ENCODE measurements at regions of chr11 and their contacts with region 1.

Region 1: DNA sequence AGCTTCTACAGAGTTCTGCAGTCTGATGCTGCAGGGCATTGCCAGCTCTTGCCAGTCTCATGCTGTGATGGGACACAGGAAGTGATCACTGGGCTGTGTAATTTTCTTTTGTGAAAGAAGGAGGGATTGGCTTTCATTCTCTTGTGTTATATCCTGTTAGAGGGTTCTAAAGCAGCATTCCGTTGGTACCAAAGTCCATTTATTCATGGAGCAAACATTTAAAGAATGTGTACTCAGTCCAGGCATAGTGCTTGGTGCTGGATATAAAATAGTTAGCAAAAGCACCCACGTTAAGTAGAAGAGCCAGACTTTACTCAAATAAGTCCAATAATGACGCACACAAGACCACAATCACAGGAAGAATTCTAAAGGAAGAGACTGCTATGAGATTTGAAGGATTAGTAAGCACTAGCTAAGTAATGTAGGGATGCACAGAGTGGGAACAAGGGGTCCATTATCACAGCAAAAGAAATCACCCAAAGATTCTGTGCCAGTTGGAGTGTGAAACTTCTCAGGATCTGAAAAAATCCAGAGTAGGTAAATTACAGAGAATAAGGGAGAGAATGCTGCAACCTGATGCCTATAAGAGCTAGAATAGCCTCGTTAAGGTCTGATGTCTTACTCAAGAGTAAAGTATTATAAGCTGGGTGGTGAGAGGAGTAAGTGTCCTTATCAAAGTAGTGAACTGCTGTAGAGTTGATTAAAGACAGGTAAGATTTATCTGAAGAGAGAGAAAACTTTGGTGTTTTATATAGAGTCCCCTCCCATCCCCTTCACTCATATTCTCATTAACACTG is 728.3 kb downstream of the METTL15 start:
- DNase-seq: peak; percentile 81
- H3K4me3 ChIP-seq: no peak overlapping the region
- H3K27ac ChIP-seq: peak overlapping the region; percentile 96
- H3K4me1 ChIP-seq: peaks cover 70% of the 10 kb centered on the region
- H3K27me3 ChIP-seq: no peaks in the 10 kb centered on the region
- CTCF ChIP-seq: no peak
- POLR2A ChIP-seq: peak; percentile 82

Region 2: DNA sequence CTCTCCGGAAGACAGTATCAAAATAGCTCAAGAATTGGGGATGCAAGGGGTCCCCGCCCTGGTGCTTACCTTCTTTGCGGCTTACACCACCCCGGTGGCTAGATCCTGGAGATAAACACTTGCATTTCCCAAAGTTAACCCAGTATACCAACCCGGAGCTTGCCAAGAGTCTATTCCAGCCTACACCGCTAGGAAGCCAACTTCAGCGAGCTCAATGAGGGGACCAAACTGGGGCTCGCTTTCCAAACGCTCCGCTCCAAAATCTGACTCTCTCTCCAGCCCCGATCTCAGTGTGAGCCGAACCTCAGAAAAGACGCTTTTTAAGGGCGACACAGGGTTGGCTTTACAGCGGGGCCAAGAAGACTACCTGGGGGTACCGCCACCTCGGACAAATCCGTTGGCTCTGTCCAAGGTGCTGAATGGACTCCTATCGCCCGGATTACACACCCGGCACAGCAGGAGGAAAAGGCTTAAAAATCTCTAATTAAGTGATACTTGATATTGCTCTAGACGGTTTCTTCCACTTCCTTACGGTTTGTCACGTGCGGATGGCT is 1116.1 kb before region 1 on chr11:
- CTCF ChIA-PET with region 1: no interaction called
- POLR2A ChIA-PET with region 1: no interaction called
- dilution Hi-C with region 1: no loop called
- intact Hi-C with region 1: loop called (anchors 5 kb)
- DNase-seq: peak; percentile 52
- H3K4me3 ChIP-seq: no peak overlapping the region
- H3K27ac ChIP-seq: no peak overlapping the region
- H3K4me1 ChIP-seq: peaks cover 14% of the 10 kb centered on the region
- H3K27me3 ChIP-seq: peaks cover 50 to 80% of the 10 kb centered on the region in 2 experiments
- CTCF ChIP-seq: peak; percentile 8 to 20
- POLR2A ChIP-seq: no peak

Region 3: GRCh38 chr11:28649922-28650321 is 186.6 kb before region 1 on chr11:
- CTCF ChIA-PET with region 1: no interaction called
- POLR2A ChIA-PET with region 1: no interaction called
- dilution Hi-C with region 1: no loop called
- intact Hi-C with region 1: no loop called
- DNase-seq: peak; percentile 44
- H3K4me3 ChIP-seq: no peak overlapping the region
- H3K27ac ChIP-seq: no peak overlapping the region
- H3K4me1 ChIP-seq: peaks cover 11% of the 10 kb centered on the region
- H3K27me3 ChIP-seq: no peaks in the 10 kb centered on the region
- CTCF ChIP-seq: no peak
- POLR2A ChIP-seq: no peak

Region 4: GRCh38 chr11:28697920-28698827 is 138.3 kb before region 1 on chr11:
- CTCF ChIA-PET with region 1: interaction called, 5 read pairs
- POLR2A ChIA-PET with region 1: no interaction called
- dilution Hi-C with region 1: no loop called
- intact Hi-C with region 1: loop called (anchors 1 kb)
- DNase-seq: peak; percentile 60
- H3K4me3 ChIP-seq: no peak overlapping the region
- H3K27ac ChIP-seq: no peak overlapping the region
- H3K4me1 ChIP-seq: peaks cover 21% of the 10 kb centered on the region
- H3K27me3 ChIP-seq: no peaks in the 10 kb centered on the region
- CTCF ChIP-seq: peak; percentile 73 to 80
- POLR2A ChIP-seq: no peak

Region 5: DNA sequence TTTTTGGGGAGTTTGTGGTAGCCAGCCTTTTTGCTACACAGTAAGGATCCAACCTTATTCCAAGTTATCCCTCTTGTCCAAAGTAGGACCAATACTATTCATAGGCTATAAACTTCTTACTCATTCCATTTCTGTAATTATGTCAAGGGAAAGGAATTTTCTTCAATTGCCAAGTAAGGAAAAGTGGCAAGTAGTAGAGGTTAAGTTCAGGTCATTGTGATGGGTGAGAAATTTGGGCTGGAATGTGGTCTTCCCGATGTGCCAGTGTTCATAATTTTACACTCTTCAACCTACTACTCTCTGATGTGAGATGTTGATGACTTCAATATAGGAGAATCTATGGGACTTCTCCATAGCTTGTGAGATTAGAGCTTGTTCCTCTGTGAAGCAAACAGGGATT is 79.5 kb before region 1 on chr11:
- CTCF ChIA-PET with region 1: interaction called, 10 read pairs
- POLR2A ChIA-PET with region 1: interaction called, 18 read pairs
- dilution Hi-C with region 1: no loop called
- intact Hi-C with region 1: loop called (anchors 1 kb)
- DNase-seq: peak; percentile 83
- H3K4me3 ChIP-seq: peak overlapping the region in 1 of 3 experiments; percentile 42
- H3K27ac ChIP-seq: peak overlapping the region; percentile 90
- H3K4me1 ChIP-seq: peaks cover 39% of the 10 kb centered on the region
- H3K27me3 ChIP-seq: no peaks in the 10 kb centered on the region
- CTCF ChIP-seq: no peak
- POLR2A ChIP-seq: no peak

Region 6: GRCh38 chr11:28798286-28798685 is 38.2 kb before region 1 on chr11:
- CTCF ChIA-PET with region 1: no interaction called
- POLR2A ChIA-PET with region 1: no interaction called
- dilution Hi-C with region 1: no loop called
- intact Hi-C with region 1: loop called (anchors 1 kb)
- DNase-seq: peak; percentile 86
- H3K4me3 ChIP-seq: no peak overlapping the region
- H3K27ac ChIP-seq: peak overlapping the region; percentile 74
- H3K4me1 ChIP-seq: peaks cover 34% of the 10 kb centered on the region
- H3K27me3 ChIP-seq: no peaks in the 10 kb centered on the region
- CTCF ChIP-seq: no peak
- POLR2A ChIP-seq: peak; percentile 41

Region 7: GRCh38 chr11:29019960-29020683 is 183.6 kb after region 1 on chr11:
- CTCF ChIA-PET with region 1: interaction called, 26 read pairs
- POLR2A ChIA-PET with region 1: interaction called, 4 read pairs
- dilution Hi-C with region 1: no loop called
- intact Hi-C with region 1: loop called (anchors 1 kb)
- DNase-seq: peak; percentile 80
- H3K4me3 ChIP-seq: no peak overlapping the region
- H3K27ac ChIP-seq: peak overlapping the region; percentile 97
- H3K4me1 ChIP-seq: peaks cover 31% of the 10 kb centered on the region
- H3K27me3 ChIP-seq: no peaks in the 10 kb centered on the region
- CTCF ChIP-seq: peak; percentile 50 to 70
- POLR2A ChIP-seq: peak; percentile 22

Region 8: DNA sequence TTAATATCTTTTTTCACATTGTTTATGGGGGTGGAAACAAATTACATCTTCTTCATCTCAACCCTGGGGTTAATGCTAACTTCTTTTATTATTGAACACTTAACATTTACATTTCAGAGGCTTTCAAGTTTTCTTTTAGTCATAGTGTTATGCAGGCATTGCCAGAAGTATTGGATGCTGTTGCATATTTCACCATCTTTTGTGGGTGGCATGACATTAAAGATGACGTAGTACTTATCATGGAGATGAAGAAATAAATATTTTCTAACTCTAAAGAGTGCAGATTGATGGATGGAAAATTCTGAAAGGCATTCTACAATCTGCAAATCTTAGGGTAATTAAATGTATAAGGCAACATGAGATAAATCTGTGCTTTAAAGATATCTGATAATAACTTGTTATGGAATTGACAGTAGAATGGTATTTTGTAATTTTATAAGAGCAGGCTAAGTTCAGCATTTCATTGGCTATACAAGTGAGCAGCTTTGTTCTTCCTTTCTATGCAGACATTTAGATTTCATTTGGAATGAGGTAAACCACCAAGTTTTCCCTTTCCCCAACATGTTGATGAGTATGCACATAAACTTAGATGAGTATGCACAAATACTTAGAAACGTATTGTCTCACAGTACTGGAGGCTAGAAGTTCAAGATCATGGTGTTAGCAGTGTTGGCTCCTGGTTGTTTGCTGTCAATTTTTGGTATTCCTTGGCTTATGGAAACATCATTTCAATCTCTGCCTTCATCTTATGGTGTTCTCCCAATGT is 196.1 kb after region 1 on chr11:
- CTCF ChIA-PET with region 1: no interaction called
- POLR2A ChIA-PET with region 1: no interaction called
- dilution Hi-C with region 1: no loop called
- intact Hi-C with region 1: no loop called
- DNase-seq: no peak
- H3K4me3 ChIP-seq: no peak overlapping the region
- H3K27ac ChIP-seq: no peak overlapping the region
- H3K4me1 ChIP-seq: no peaks in the 10 kb centered on the region
- H3K27me3 ChIP-seq: no peaks in the 10 kb centered on the region
- CTCF ChIP-seq: no peak
- POLR2A ChIP-seq: no peak

Region 9: GRCh38 chr11:29159552-29160465 is 323.3 kb after region 1 on chr11:
- CTCF ChIA-PET with region 1: interaction called, 26 read pairs
- POLR2A ChIA-PET with region 1: no interaction called
- dilution Hi-C with region 1: no loop called
- intact Hi-C with region 1: loop called (anchors 1 kb)
- DNase-seq: peak; percentile 82
- H3K4me3 ChIP-seq: no peak overlapping the region
- H3K27ac ChIP-seq: peak overlapping the region; percentile 12
- H3K4me1 ChIP-seq: peaks cover 9% of the 10 kb centered on the region
- H3K27me3 ChIP-seq: no peaks in the 10 kb centered on the region
- CTCF ChIP-seq: peak; percentile 67 to 71
- POLR2A ChIP-seq: no peak